ENCODE measurements at regions of chr15 and their contacts with region 1.

Region 1: GRCh38 chr15:79140839-79141570 is 50.4 kb upstream of the RASGRF1 start:
- DNase-seq: no peak
- H3K4me3 ChIP-seq: no peak overlapping the region
- H3K27ac ChIP-seq: no peak overlapping the region
- H3K4me1 ChIP-seq: no peaks in the 10 kb centered on the region
- H3K27me3 ChIP-seq: peaks cover 3% of the 10 kb centered on the region
- CTCF ChIP-seq: no peak

Region 2: GRCh38 chr15:79084308-79084968 is 56.6 kb before region 1 on chr15:
- CTCF ChIA-PET with region 1: no interaction called
- dilution Hi-C with region 1: loop called (anchors 5 kb)
- in situ Hi-C with region 1: no loop called
- intact Hi-C with region 1: no loop called
- DNase-seq: no peak
- H3K4me3 ChIP-seq: no peak overlapping the region
- H3K27ac ChIP-seq: no peak overlapping the region
- H3K4me1 ChIP-seq: no peaks in the 10 kb centered on the region
- H3K27me3 ChIP-seq: peaks cover 12% of the 10 kb centered on the region
- CTCF ChIP-seq: no peak

Region 3: DNA sequence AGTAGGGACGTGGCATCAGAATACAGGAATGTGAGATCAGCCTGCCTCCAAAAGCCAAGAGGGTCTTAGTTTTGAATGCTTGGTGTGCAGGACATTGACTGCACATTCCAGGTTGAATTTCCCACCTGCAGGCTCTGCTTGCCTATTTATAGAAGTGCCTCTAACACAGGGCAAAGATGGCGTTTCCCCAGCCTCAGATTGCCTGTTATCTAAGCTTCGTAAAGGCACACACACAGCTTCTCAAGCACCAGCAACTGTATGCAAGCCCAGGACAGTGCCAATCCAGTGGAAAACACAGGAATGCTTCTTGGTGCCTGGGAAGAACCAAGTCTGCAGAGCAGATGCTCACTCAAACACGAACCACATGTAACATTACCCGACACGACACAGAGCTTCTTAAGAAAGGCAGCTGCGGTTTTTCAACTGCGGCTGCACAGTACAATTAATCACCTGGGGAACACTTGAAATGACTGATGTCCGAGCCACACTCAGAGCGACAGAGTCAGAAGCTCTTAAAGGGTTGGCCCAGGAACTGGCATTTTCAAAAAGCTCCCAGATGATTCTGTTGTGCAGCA is 51.5 kb after region 1 on chr15:
- CTCF ChIA-PET with region 1: no interaction called
- dilution Hi-C with region 1: loop called (anchors 5 kb)
- in situ Hi-C with region 1: no loop called
- intact Hi-C with region 1: no loop called
- DNase-seq: no peak
- H3K4me3 ChIP-seq: no peak overlapping the region
- H3K27ac ChIP-seq: no peak overlapping the region
- H3K4me1 ChIP-seq: no peaks in the 10 kb centered on the region
- H3K27me3 ChIP-seq: peaks cover 2% of the 10 kb centered on the region
- CTCF ChIP-seq: no peak

Measured in mammary epithelial cell (primary cell).